ENCODE measurements at regions of chr5 and their contacts with region 1.

Region 1: GRCh38 chr5:163564321-163564938 is 59.0 kb downstream of the MAT2B start:
- DNase-seq: peak; percentile 39 to 67 (median 65)
- ATAC-seq: peak; percentile 81
- H3K4me3 ChIP-seq: no peak overlapping the region
- H3K27ac ChIP-seq: no peak overlapping the region
- H3K4me1 ChIP-seq: peaks cover 0 to 3% of the 10 kb centered on the region in 2 experiments; a peak in 1 of 5 replicates
- H3K27me3 ChIP-seq: peaks cover 8 to 10% of the 10 kb centered on the region in 2 experiments; a peak in 4 of 5 replicates
- CTCF ChIP-seq: peak; percentile 65 to 86 (median 76)
- EP300 ChIP-seq: no peak
- POLR2A ChIP-seq: no peak
- RAD21 ChIP-seq: peak; percentile 68 to 85

Region 2: DNA sequence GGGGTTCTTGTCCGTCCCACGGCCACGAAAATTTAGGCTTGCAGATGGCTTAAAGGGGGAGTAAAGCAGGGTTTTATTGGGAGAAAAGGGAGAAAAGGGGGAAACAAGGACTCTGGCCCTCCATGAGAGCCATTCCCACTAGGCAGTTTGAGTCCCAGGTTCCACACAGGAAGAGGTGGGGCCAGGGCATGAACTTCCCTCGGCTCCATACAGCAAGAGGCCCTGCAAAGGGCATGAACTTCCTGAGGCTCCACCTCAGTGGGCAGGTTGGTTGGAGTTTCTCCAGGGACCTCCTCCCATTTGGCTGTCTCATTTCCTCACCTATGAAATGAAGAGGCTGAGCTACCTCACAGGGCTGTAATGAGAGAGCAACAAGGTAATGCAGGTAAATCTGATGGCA is 170.6 kb after region 1 on chr5:
- CTCF ChIA-PET with region 1: no interaction called
- POLR2A ChIA-PET with region 1: no interaction called
- in situ Hi-C with region 1: no loop called
- intact Hi-C with region 1: no loop called
- DNase-seq: no peak
- ATAC-seq: no peak
- H3K4me3 ChIP-seq: no peak overlapping the region
- H3K27ac ChIP-seq: no peak overlapping the region
- H3K4me1 ChIP-seq: no peaks in the 10 kb centered on the region
- H3K27me3 ChIP-seq: no peaks in the 10 kb centered on the region
- CTCF ChIP-seq: no peak
- EP300 ChIP-seq: no peak
- POLR2A ChIP-seq: no peak
- RAD21 ChIP-seq: no peak

Region 3: GRCh38 chr5:164013077-164013670 is 448.7 kb after region 1 on chr5:
- CTCF ChIA-PET with region 1: no interaction called
- POLR2A ChIA-PET with region 1: no interaction called
- in situ Hi-C with region 1: no loop called
- intact Hi-C with region 1: loop called (anchors 5 kb)
- DNase-seq: peak; percentile 37 to 80 (median 42)
- ATAC-seq: peak; percentile 82
- H3K4me3 ChIP-seq: no peak overlapping the region
- H3K27ac ChIP-seq: no peak overlapping the region
- H3K4me1 ChIP-seq: no peaks in the 10 kb centered on the region
- H3K27me3 ChIP-seq: no peaks in the 10 kb centered on the region
- CTCF ChIP-seq: peak; percentile 57 to 77 (median 68)
- EP300 ChIP-seq: no peak
- POLR2A ChIP-seq: no peak
- RAD21 ChIP-seq: peak; percentile 93 to 94

Region 4: GRCh38 chr5:164487939-164488338 is 923.5 kb after region 1 on chr5:
- CTCF ChIA-PET with region 1: no interaction called
- POLR2A ChIA-PET with region 1: no interaction called
- in situ Hi-C with region 1: loop called (anchors 10 kb)
- intact Hi-C with region 1: no loop called
- DNase-seq: peak in 1 of 4 experiments; percentile 36
- ATAC-seq: peak; percentile 34; the same call in 1 of the 3 replicates
- H3K4me3 ChIP-seq: no peak overlapping the region
- H3K27ac ChIP-seq: no peak overlapping the region
- H3K4me1 ChIP-seq: no peaks in the 10 kb centered on the region; a peak in 1 of 5 replicates
- H3K27me3 ChIP-seq: no peaks in the 10 kb centered on the region
- CTCF ChIP-seq: no peak
- EP300 ChIP-seq: no peak
- POLR2A ChIP-seq: no peak
- RAD21 ChIP-seq: no peak

Region 5: GRCh38 chr5:165209086-165209727 is 1644.8 kb after region 1 on chr5:
- CTCF ChIA-PET with region 1: interaction called, 4 read pairs
- POLR2A ChIA-PET with region 1: no interaction called
- in situ Hi-C with region 1: loop called (anchors 25 kb)
- intact Hi-C with region 1: loop called (anchors 10 kb)
- DNase-seq: peak in 1 of 4 experiments; percentile 8
- ATAC-seq: no peak
- H3K4me3 ChIP-seq: no peak overlapping the region
- H3K27ac ChIP-seq: no peak overlapping the region
- H3K4me1 ChIP-seq: no peaks in the 10 kb centered on the region
- H3K27me3 ChIP-seq: no peaks in the 10 kb centered on the region
- CTCF ChIP-seq: peak in 1 of 3 experiments; percentile 47; a peak in 3 of 6 replicates
- EP300 ChIP-seq: no peak
- POLR2A ChIP-seq: no peak
- RAD21 ChIP-seq: peak in 1 of 2 experiments; percentile 44; a peak in 2 of 4 replicates

Region 6: GRCh38 chr5:165457859-165458481 is 1893.5 kb after region 1 on chr5:
- CTCF ChIA-PET with region 1: no interaction called
- POLR2A ChIA-PET with region 1: no interaction called
- in situ Hi-C with region 1: no loop called
- intact Hi-C with region 1: loop called (anchors 10 kb)
- DNase-seq: peak in 1 of 4 experiments; percentile 1
- ATAC-seq: no peak
- H3K4me3 ChIP-seq: no peak overlapping the region
- H3K27ac ChIP-seq: no peak overlapping the region
- H3K4me1 ChIP-seq: no peaks in the 10 kb centered on the region
- H3K27me3 ChIP-seq: no peaks in the 10 kb centered on the region
- CTCF ChIP-seq: peak in 1 of 3 experiments; percentile 22; a peak in 1 of 6 replicates
- EP300 ChIP-seq: no peak
- POLR2A ChIP-seq: no peak
- RAD21 ChIP-seq: no peak